ENCODE measurements at regions of chr15 and their contacts with region 1.

Region 1: GRCh38 chr15:62125773-62126172 is 39.3 kb downstream of the C2CD4B start:
- DNase-seq: peak; percentile 38
- ATAC-seq: peak; percentile 97
- H3K4me3 ChIP-seq: no peak overlapping the region
- H3K27ac ChIP-seq: no peak overlapping the region
- H3K4me1 ChIP-seq: no peaks in the 10 kb centered on the region
- H3K27me3 ChIP-seq: no peaks in the 10 kb centered on the region
- CTCF ChIP-seq: peak; percentile 13 to 65 (median 61); a peak in 4 of 6 replicates
- POLR2A ChIP-seq: no peak
- RAD21 ChIP-seq: peak; percentile 38

Region 2: GRCh38 chr15:62138124-62138523 is 12.4 kb after region 1 on chr15:
- CTCF ChIA-PET with region 1: interaction called, 12 read pairs
- POLR2A ChIA-PET with region 1: no interaction called
- RAD21 ChIA-PET with region 1: no interaction called
- intact Hi-C with region 1: no loop called
- DNase-seq: no peak
- ATAC-seq: no peak
- H3K4me3 ChIP-seq: no peak overlapping the region
- H3K27ac ChIP-seq: no peak overlapping the region
- H3K4me1 ChIP-seq: peaks cover 5 to 9% of the 10 kb centered on the region in 2 experiments; a peak in 3 of 4 replicates
- H3K27me3 ChIP-seq: no peaks in the 10 kb centered on the region
- CTCF ChIP-seq: no peak
- POLR2A ChIP-seq: no peak
- RAD21 ChIP-seq: no peak

Region 3: DNA sequence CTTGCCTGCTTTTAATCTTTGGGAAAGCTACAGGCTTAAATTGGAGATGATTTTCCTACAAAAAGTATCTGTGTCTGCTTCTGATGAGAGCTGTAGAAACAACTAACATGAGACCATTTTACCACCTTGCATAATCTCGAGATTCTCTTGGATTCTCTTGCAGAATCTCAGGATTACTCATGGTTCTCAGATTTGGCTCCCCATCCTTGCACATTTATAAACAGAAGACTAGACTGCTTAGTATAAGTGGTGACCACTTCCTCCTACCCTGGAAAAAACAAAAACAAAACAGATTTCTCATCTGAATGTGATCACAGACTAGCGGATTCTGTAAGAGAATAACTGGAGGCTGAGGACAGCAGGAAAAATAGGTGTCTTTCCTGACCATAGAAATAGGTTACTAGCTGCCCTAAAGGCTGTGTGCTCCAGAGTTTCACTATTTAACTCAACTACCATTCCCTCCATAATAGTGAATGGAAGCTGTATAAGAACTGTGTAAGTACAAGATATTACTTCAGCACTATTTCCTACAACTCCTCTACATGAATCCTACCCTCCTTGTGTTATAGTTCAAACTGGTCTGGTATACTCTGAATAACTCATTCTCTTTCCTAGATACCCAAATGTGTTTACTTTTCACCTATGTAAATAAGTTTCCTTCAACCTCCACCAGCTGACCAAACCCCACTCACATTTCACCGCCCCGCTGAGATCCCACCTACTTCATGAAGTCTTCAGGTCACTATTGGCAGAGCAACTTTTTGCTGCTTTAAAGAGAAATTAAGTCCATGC is 161.5 kb after region 1 on chr15:
- CTCF ChIA-PET with region 1: no interaction called
- POLR2A ChIA-PET with region 1: no interaction called
- RAD21 ChIA-PET with region 1: no interaction called
- intact Hi-C with region 1: no loop called
- DNase-seq: no peak
- ATAC-seq: no peak
- H3K4me3 ChIP-seq: no peak overlapping the region
- H3K27ac ChIP-seq: no peak overlapping the region
- H3K4me1 ChIP-seq: no peaks in the 10 kb centered on the region
- H3K27me3 ChIP-seq: peaks cover 44% of the 10 kb centered on the region
- CTCF ChIP-seq: no peak
- POLR2A ChIP-seq: no peak
- RAD21 ChIP-seq: no peak

Region 4: GRCh38 chr15:62306851-62307504 is 181.2 kb after region 1 on chr15:
- CTCF ChIA-PET with region 1: interaction called, 15 read pairs
- POLR2A ChIA-PET with region 1: no interaction called
- RAD21 ChIA-PET with region 1: no interaction called
- intact Hi-C with region 1: no loop called
- DNase-seq: peak; percentile 68
- ATAC-seq: peak; percentile 99
- H3K4me3 ChIP-seq: no peak overlapping the region
- H3K27ac ChIP-seq: no peak overlapping the region
- H3K4me1 ChIP-seq: no peaks in the 10 kb centered on the region
- H3K27me3 ChIP-seq: 0 out of 2 replicates have a peak, but pooled peaks cover 3% of the 10 kb centered on the region
- CTCF ChIP-seq: peak; percentile 55 to 71 (median 58); a peak in 5 of 6 replicates
- POLR2A ChIP-seq: no peak
- RAD21 ChIP-seq: peak; percentile 75

Measured in HCT116 (cell line).